Activated CD4-positive, alpha-beta T cell treated with anti-CD3 and anti-CD28 coated beads, Interleukin-2, amount 10 ng/mL, durations not matched to agents 24 days and 14 days (primary cell): ENCODE measurements at regions of chr2 and their contacts with region 1.

Region 1: DNA sequence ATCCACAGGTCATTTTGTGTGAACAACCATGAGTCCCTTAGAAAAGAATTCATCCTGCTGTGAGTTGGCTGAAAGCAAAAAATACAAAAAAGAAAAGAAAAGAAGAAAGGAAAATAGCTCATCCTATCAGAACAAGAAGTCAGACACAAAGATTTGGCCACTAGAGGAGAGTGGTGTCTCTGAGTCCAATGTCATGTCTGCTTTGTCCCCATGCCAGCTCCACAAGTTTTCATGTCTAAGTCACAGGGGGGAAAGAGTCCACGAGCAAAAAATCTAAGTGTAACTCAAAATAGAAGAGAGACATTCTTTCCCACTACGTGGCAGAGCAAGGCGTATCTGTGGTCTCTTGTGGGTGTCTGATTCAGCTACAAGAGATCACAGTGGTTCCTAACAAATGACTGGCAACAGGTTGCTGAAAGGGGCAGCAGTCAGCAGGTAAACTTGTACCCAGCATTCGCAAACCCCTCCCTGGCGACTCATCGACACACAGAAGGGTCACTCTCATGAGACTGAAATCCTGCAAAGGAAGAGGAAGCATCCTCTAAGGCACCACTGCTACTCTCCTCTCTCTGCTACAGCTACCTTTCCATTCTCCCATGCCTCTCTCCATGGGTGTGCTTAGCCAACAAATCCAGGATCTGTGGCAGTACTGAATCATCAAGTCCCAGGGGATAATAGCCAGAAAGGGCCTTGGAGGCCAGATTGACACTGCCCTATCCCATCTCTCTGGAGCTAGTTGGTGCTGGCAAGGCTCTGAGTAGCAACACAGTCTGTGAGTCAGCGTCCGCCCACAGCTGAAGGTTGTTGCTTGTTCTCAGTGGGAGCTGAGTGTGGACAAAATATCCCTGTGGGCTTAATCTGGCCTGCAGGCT is 123.0 kb upstream of the SLC39A10 start:
- DNase-seq: peak; percentile 89
- H3K4me3 Mint-ChIP-seq: peak overlapping the region; percentile 87
- H3K27ac Mint-ChIP-seq: peak overlapping the region; percentile 99
- H3K4me1 Mint-ChIP-seq: peaks cover 72% of the 10 kb centered on the region
- H3K27me3 Mint-ChIP-seq: no peaks in the 10 kb centered on the region

Region 2: DNA sequence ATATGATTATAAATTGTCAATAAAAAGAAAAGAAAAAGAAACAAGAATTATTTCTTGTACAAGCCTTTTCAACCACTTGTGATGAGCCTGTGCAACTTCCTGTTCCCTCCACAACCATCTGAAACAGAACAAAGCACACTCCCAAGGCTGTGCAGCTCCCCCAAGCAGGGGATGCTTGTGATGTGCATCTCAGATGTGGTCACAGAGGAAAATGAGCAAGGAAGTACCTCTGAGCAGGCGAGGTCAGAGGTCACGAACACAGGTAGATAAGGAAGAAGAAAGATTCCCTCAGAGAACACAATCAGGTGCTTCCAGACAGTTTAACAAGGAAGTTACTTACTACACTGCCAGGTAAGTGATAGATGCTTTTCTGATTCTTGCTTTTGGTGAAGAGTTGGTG is 151.8 kb before region 1 on chr2:
- intact Hi-C with region 1: no loop called
- DNase-seq: peak; percentile 80
- H3K4me3 Mint-ChIP-seq: peak overlapping the region; percentile 13
- H3K27ac Mint-ChIP-seq: peak overlapping the region; percentile 81
- H3K4me1 Mint-ChIP-seq: peaks cover 15% of the 10 kb centered on the region
- H3K27me3 Mint-ChIP-seq: no peaks in the 10 kb centered on the region

Region 3: GRCh38 chr2:195477248-195477995 is 56.6 kb before region 1 on chr2:
- intact Hi-C with region 1: loop called (anchors 2 kb)
- DNase-seq: no peak
- H3K4me3 Mint-ChIP-seq: no peak overlapping the region
- H3K27ac Mint-ChIP-seq: peak overlapping the region; percentile 65
- H3K4me1 Mint-ChIP-seq: peaks cover 36% of the 10 kb centered on the region
- H3K27me3 Mint-ChIP-seq: no peaks in the 10 kb centered on the region

Region 4: DNA sequence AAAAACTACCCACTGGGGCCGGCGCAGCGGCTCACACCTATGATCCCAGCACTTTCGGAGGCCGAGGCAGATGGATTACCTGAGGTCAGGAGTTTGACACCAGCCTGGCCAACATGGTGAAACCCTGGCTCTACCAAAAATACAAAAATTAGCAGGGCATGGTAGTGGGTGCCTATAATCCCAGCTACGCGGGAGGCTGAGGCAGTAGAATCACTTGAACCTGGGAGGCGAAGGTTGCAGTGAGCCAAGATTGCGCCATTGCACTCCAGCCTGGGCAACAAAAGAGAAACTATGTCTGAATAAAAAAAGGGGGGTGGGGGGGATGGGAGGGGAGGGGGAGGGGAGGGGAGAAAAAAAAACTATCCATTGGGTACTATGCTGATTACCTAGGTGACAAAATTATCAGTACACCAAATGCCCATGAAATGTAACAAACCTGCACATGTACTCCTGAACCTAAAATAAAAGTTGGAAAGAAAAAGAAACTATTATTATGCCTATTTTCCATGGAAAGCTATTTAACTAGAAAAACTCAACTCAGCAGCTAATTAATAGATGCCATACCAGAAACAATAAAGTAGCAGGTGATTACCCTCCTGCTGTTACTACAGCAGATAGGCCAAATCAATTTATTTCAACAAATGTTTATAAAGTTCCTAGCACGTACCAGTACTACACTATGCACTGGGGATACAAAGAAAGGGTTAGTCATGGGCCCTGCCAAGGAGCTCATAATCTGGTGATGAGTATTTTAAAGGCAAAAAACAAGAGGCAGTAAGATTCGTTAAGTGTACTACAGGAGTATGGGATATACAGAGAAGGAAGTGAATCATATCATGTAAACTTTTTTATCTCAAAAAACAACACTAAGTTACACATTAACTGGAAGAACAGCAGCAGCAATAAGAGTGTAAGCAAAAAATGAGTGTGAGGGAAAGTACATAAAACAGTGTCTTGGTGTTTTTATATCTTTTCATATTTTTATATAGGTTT is 10.2 kb after region 1 on chr2:
- intact Hi-C with region 1: loop called (anchors 1 kb)
- DNase-seq: peak; percentile 75
- H3K4me3 Mint-ChIP-seq: peak overlapping the region; percentile 29
- H3K27ac Mint-ChIP-seq: peak overlapping the region; percentile 91
- H3K4me1 Mint-ChIP-seq: peaks cover 67% of the 10 kb centered on the region
- H3K27me3 Mint-ChIP-seq: no peaks in the 10 kb centered on the region

Region 5: DNA sequence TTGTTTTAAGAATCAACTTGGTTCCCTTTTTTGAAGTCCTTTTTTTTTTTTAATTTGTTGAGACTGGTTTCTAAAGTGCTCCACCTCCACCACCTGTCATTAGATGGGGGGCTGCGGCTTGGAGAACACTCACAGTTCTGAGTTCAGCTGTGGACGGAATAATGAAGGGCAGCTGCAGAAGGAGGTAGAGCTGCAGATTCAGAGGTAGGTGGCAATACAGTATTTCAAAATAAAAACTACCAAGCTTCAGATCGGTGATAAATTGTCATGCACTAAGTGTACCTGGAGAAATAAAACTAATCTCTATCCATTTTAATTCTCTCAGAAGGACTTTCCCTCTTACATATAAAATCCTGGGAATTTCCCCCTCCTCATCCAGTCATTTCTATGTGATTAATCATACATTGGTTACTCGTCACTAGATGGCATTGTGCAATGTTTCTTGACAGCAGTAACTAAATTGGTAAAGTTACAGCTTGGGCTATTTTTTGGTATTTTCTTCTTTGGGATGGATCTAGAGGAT is 41.9 kb after region 1 on chr2:
- intact Hi-C with region 1: loop called (anchors 5 kb)
- DNase-seq: no peak
- H3K4me3 Mint-ChIP-seq: peak overlapping the region; percentile 37
- H3K27ac Mint-ChIP-seq: peak overlapping the region; percentile 40
- H3K4me1 Mint-ChIP-seq: peaks cover 49% of the 10 kb centered on the region
- H3K27me3 Mint-ChIP-seq: no peaks in the 10 kb centered on the region

Region 6: GRCh38 chr2:195756201-195756927 is 222.4 kb after region 1 on chr2:
- intact Hi-C with region 1: no loop called
- DNase-seq: no peak
- H3K4me3 Mint-ChIP-seq: no peak overlapping the region
- H3K27ac Mint-ChIP-seq: no peak overlapping the region
- H3K4me1 Mint-ChIP-seq: no peaks in the 10 kb centered on the region
- H3K27me3 Mint-ChIP-seq: no peaks in the 10 kb centered on the region

Region 7: DNA sequence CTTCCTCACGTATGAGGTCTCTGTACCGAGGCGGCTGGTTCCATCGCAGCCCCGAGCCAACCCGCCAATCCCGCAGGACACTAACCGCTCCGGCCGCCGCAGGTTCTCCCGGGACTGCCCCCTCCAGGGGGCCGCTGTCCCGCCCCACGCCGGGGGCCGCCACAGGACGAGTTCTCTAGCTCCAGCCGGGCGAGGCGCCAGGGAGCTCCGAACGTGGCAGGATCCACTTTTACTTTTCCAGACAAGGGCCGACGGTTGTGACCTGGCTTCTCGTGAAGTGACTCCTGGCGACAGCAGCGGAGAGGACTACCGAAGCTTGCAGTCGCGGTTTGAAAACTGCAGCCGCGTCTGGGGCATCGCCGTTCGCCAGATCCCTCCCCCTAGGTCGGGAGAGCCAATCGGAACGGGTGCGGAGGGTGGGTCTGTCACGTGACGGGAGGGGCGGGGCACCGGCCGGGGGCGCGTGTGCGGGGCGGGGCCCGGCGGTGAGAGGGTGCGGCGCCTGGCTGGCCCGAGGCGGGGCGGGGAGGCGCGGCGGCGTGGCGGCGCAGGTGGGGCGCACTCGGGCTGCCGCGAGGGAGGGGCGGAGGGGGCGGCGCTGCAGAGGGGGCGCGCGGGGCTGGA is 637.4 kb after region 1 on chr2 and contains the start of gene STK17B:
- intact Hi-C with region 1: loop called (anchors 5 kb)
- DNase-seq: peak; percentile 98
- H3K4me3 Mint-ChIP-seq: peak within 1 kb of the TSS; percentile 93
- H3K27ac Mint-ChIP-seq: peak within 1 kb of the TSS; percentile 99
- H3K4me1 Mint-ChIP-seq: peaks cover 40% of the 10 kb centered on the region
- H3K27me3 Mint-ChIP-seq: no peaks in the 10 kb centered on the region
- total RNA-seq, gene STK17B: 129 and 131 TPM in 2 replicates